ENCODE measurements at regions of chr10 and their contacts with region 1.

Region 1: DNA sequence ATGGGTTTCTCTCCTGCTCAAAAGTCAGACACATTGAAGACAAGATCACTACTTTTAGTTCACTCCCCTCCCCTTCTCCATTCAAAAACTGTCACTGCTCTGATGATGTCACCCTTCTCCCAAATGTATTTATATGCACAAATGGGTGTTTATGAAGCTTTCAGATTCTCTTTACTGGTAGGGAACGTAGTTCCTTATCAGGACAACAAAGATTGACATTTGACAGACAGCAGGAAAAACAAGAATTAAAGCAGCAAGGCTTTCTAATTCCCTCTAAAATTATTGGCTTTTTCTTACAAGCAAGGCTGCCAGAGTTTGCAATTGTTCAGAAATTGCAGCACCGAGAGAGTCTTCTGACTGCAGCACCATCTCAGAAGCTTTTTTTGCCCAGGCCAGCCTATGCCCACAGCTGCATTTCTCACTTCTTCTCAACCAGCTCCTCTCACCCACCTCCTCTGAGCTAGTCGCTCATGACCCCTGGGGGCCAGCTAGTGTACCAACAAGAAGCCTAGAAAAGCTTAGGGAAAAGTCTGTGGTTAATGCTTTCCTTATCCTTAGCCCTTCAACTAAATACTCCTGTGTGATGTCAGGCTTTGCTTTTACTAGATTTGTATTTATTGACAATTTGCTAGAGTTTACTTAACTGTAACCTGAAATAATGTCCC is 265.1 kb downstream of the HTR7 start:
- DNase-seq: peak; percentile 58 to 62
- H3K4me3 ChIP-seq: no peak overlapping the region
- H3K4me3 Mint-ChIP-seq: no peak overlapping the region
- H3K27ac Mint-ChIP-seq: no peak overlapping the region
- H3K4me1 ChIP-seq: peaks cover under 1% of the 10 kb centered on the region; the same call in 1 of the 2 replicates
- H3K4me1 Mint-ChIP-seq: peaks cover 11% of the 10 kb centered on the region
- H3K27me3 ChIP-seq: no peaks in the 10 kb centered on the region
- H3K27me3 Mint-ChIP-seq: peaks cover 14% of the 10 kb centered on the region
- CTCF ChIP-seq: peak; percentile 58 to 74

Region 2: GRCh38 chr10:89954787-89955566 is 637.8 kb before region 1 on chr10:
- CTCF ChIA-PET with region 1: no interaction called
- POLR2A ChIA-PET with region 1: no interaction called
- intact Hi-C with region 1: loop called (anchors 2 kb)
- DNase-seq: no peak
- H3K4me3 ChIP-seq: no peak overlapping the region
- H3K4me3 Mint-ChIP-seq: no peak overlapping the region
- H3K27ac Mint-ChIP-seq: no peak overlapping the region
- H3K4me1 ChIP-seq: no peaks in the 10 kb centered on the region
- H3K4me1 Mint-ChIP-seq: no peaks in the 10 kb centered on the region
- H3K27me3 ChIP-seq: no peaks in the 10 kb centered on the region
- H3K27me3 Mint-ChIP-seq: peaks cover 3% of the 10 kb centered on the region
- CTCF ChIP-seq: peak; percentile 19 to 40

Region 3: GRCh38 chr10:90148116-90148855 is 444.5 kb before region 1 on chr10:
- CTCF ChIA-PET with region 1: interaction called, 18 read pairs
- POLR2A ChIA-PET with region 1: no interaction called
- intact Hi-C with region 1: loop called (anchors 1 kb)
- DNase-seq: peak in 1 of 2 experiments; percentile 16
- H3K4me3 ChIP-seq: no peak overlapping the region
- H3K4me3 Mint-ChIP-seq: no peak overlapping the region
- H3K27ac Mint-ChIP-seq: no peak overlapping the region
- H3K4me1 ChIP-seq: no peaks in the 10 kb centered on the region
- H3K4me1 Mint-ChIP-seq: no peaks in the 10 kb centered on the region
- H3K27me3 ChIP-seq: no peaks in the 10 kb centered on the region
- H3K27me3 Mint-ChIP-seq: peaks cover 8% of the 10 kb centered on the region
- CTCF ChIP-seq: peak; percentile 29 to 54

Region 4: DNA sequence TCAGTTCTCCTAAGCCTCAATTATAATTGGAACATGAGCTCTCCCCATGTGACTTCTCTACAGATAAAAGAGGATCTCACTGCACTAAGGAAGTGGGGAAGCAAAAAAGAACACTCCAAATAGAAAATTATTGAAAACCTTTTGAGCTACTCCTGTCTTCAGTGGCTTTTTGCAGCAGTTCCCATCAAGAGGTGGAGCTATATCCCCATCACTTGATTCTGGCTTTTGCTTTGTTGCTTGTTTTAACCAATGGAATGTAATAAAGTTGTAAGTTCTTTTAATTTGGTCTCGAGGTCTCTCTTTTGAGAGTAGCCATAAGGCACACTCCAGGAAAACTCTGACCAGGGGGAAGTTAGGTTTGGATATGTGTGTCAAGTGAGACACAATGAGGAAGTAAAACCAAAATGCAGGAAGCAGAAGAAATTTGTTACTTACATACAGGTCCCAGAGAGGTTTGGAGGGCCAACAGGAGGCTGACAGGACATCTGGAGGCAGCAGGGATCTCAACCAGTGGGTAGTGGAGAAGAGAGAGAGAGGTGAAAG is 304.3 kb before region 1 on chr10:
- CTCF ChIA-PET with region 1: interaction called, 14 read pairs
- POLR2A ChIA-PET with region 1: no interaction called
- intact Hi-C with region 1: no loop called
- DNase-seq: no peak
- H3K4me3 ChIP-seq: no peak overlapping the region
- H3K4me3 Mint-ChIP-seq: no peak overlapping the region
- H3K27ac Mint-ChIP-seq: no peak overlapping the region
- H3K4me1 ChIP-seq: no peaks in the 10 kb centered on the region
- H3K4me1 Mint-ChIP-seq: no peaks in the 10 kb centered on the region
- H3K27me3 ChIP-seq: no peaks in the 10 kb centered on the region
- H3K27me3 Mint-ChIP-seq: peaks cover 23% of the 10 kb centered on the region
- CTCF ChIP-seq: no peak

Region 5: DNA sequence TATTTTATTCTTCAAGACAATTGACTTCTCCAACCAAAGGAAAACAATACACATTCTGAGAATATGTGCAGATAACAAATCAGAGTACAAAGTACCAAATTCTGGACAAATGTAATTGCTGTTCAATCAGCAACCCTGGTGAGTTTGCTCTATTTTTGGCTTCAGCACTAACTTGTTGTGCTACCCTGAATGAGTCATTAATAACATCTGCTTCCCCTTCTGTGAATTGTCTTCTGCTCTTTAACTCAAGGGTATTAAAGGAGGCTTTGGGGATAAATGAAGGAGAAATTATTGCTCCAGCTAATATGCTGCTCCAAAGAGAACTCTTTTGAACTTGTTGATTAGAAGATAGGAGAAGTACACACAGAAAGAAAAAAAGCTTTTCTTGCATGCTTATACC is 194.2 kb before region 1 on chr10:
- CTCF ChIA-PET with region 1: no interaction called
- POLR2A ChIA-PET with region 1: no interaction called
- intact Hi-C with region 1: no loop called
- DNase-seq: no peak
- H3K4me3 ChIP-seq: no peak overlapping the region
- H3K4me3 Mint-ChIP-seq: no peak overlapping the region
- H3K27ac Mint-ChIP-seq: no peak overlapping the region
- H3K4me1 ChIP-seq: no peaks in the 10 kb centered on the region
- H3K4me1 Mint-ChIP-seq: no peaks in the 10 kb centered on the region
- H3K27me3 ChIP-seq: no peaks in the 10 kb centered on the region
- H3K27me3 Mint-ChIP-seq: peaks cover 6% of the 10 kb centered on the region
- CTCF ChIP-seq: no peak